HEK293T (cell line): ENCODE measurements at regions of chrX and their contacts with region 1.

Region 1: GRCh38 chrX:101390664-101391525 is at the start of gene RPL36A:
- DNase-seq: peak; percentile 92

Region 2: GRCh38 chrX:101160001-101160400 is 230.9 kb before region 1 on chrX:
- CTCF ChIA-PET with region 1: no interaction called
- POLR2A ChIA-PET with region 1: no interaction called
- DNase-seq: no peak

Region 3: DNA sequence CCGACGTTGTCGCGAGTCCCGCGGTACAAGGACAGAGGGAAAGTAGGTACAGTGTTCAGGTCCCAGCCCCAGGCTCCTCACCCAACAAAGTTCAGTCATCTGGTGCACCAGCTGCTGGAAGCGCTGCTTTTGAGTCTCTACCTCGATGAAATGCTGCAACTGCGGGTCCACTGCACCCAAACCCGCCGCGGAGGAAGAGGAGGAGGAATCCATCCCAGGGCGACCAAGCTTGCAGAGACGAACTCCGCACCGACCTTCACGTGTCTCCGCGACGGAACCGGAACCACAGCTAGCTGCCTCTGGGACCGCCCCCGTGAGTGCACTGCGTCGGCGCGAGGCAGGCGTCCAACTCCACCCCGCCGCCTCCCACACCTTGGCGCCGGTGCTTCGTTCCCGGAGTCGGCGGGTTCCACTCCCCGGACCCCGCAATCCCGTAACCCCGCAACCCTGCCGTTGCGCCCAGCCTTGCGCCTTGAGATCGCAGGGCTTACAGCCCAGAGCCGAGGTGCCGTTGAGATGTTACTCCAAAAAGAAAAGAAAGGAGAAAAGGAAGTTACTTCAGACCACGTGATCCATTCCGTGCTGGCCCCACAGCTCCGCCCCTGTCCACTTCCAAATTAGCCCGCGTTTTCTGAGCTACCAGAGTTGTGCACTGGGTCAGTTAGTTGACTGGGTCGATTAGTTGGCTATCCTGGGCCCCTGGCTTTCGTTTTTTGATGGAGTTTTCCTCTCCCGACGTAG is 42.3 kb before region 1 on chrX and contains the start of gene TIMM8A:
- CTCF ChIA-PET with region 1: interaction called, 4 read pairs
- POLR2A ChIA-PET with region 1: interaction called, 95 read pairs
- DNase-seq: peak; percentile 88

Region 4: DNA sequence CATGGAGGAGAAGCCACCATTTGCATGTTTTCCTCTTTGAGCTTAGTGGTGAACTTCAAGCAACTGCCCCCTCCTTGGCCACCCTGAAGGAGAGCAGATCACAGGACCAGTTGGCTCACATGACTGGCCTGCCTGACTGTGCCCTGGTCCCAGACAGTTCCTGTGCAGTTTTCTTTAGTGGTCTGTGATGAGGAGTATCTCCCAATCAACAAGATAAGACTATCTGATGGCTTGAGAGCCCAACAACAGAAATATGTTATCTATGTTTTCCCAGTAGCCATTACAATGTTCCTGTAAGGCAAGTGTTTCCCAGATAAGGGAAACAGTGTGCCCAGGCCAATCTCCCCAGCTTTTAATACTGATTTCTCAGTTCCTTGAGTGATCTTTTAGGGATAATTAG is 28.2 kb before region 1 on chrX:
- CTCF ChIA-PET with region 1: interaction called, 7 read pairs
- POLR2A ChIA-PET with region 1: interaction called, 31 read pairs
- DNase-seq: no peak

Region 5: DNA sequence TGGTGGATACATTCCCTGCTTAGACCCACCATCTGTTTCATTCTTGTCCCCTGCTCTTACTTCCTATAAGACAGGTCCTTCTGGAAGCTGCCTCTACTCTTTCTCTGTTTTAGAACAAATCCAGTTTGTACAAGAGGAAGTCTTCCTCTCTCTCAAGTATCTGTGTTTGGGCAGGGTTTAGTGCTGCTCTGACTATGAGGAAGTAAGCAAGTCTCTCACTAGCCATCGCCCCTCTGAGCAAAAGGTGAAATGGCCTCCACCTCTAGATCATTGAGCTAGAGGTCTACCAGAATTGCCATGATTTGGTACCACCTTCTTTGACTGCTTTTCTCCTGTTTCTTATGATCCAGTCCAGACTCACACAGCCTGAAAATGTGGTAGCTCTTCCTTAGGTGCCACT is 13.3 kb before region 1 on chrX:
- CTCF ChIA-PET with region 1: interaction called, 4 read pairs
- POLR2A ChIA-PET with region 1: interaction called, 49 read pairs
- DNase-seq: no peak

Region 6: DNA sequence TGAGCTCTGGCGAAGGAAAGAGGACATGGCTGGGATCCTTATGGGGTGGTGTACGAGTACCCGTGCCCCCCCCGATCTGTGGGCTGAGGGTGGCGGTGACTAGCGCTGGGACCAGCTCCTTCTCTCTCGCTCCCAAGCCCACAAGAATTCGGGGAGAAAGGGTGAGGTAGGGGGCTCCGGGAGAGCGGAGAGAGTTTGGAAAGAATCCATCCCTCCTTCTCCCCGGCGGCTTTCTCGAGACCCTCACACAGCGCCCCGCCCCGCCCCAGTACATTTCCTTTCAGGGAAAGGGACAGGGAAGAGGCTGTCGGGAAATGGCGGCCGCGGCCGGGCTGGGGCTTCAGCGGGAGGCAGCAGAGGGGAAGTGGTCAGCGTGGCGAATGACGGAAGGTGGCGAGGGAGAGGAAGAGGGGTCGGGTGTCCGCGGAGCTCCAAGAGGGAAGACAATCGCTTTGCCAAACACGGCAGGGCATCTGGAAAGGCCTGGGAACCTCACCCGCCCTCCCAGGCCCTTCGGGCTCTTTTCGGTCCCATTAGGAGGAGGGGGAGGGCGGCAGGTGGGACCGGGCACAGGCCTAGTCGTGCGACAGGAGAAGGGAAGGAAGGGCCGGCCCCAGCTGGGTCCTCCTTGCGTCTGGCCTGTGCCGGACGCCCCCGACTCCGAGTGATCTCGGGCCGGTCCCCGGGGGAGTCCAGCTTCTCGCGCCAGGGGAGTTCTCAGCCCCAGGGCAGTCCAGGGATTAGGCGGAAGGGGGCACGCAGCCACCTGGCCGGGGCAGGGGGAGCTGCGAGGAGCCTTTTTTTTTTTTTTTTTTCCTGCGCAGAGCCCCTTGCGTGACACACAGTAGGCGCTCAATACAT is 27.3 kb after region 1 on chrX:
- CTCF ChIA-PET with region 1: interaction called, 3 read pairs
- POLR2A ChIA-PET with region 1: interaction called, 13 read pairs
- DNase-seq: peak; percentile 43